ENCODE measurements at regions of chr11 and their contacts with region 1.

Region 1: GRCh38 chr11:63838678-63839507 is at the start of gene MARK2:
- DNase-seq: peak; percentile 99 to 100 (median 99)
- H3K4me3 ChIP-seq: peak within 1 kb of the TSS; percentile 87 to 88
- H3K4me3 Mint-ChIP-seq: peak within 1 kb of the TSS; percentile 87 to 95 (median 91)
- H3K27ac ChIP-seq: peak within 1 kb of the TSS; percentile 86
- H3K27ac Mint-ChIP-seq: peak within 1 kb of the TSS; percentile 85 to 97 (median 95)
- H3K4me1 ChIP-seq: peaks cover 48% of the 10 kb centered on the region
- H3K4me1 Mint-ChIP-seq: peaks cover 40 to 72% (median 54%) of the 10 kb centered on the region in 4 donors
- H3K27me3 ChIP-seq: no peaks in the 10 kb centered on the region
- H3K27me3 Mint-ChIP-seq: no peaks in the 10 kb centered on the region
- total RNA-seq, gene MARK2: 60.4 to 68.0 TPM

Region 2: DNA sequence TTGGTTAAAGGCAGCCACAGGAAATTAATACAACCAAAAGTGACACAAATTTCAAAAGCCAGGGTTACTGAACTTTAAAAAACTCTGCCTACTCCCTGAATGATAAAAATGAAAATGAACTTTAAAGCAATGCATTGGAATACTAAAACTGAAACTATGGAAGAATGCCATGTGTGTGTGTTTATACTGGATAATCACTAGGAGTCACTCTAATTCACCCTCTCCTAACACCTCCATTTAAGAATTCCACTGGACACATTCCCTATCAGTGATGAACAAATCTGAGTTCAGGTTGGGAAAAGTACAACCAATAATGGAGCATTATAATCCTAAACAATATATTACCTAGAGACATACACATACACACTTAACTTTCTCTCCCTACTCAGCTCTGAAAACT is 197.2 kb before region 1 on chr11:
- CTCF ChIA-PET with region 1: no interaction called
- POLR2A ChIA-PET with region 1: no interaction called
- intact Hi-C with region 1: no loop called
- DNase-seq: no peak
- H3K4me3 ChIP-seq: no peak overlapping the region
- H3K4me3 Mint-ChIP-seq: no peak overlapping the region
- H3K27ac ChIP-seq: no peak overlapping the region
- H3K27ac Mint-ChIP-seq: peak overlapping the region in 3 of 7 donors; percentile 36 to 57 (median 55)
- H3K4me1 ChIP-seq: no peaks in the 10 kb centered on the region
- H3K4me1 Mint-ChIP-seq: peaks cover 7 to 19% (median 12%) of the 10 kb centered on the region in 4 donors
- H3K27me3 ChIP-seq: no peaks in the 10 kb centered on the region
- H3K27me3 Mint-ChIP-seq: no peaks in the 10 kb centered on the region

Region 3: GRCh38 chr11:63855975-63856749 is 17.3 kb after region 1 on chr11:
- CTCF ChIA-PET with region 1: interaction called, 24 read pairs
- POLR2A ChIA-PET with region 1: interaction called, 10 read pairs
- intact Hi-C with region 1: no loop called
- DNase-seq: no peak
- H3K4me3 ChIP-seq: no peak overlapping the region
- H3K4me3 Mint-ChIP-seq: peak overlapping the region in 5 of 8 donors; percentile 7 to 35 (median 13)
- H3K27ac ChIP-seq: no peak overlapping the region
- H3K27ac Mint-ChIP-seq: peak overlapping the region in 5 of 7 donors; percentile 24 to 91 (median 47)
- H3K4me1 ChIP-seq: peaks cover 62% of the 10 kb centered on the region
- H3K4me1 Mint-ChIP-seq: peaks cover 33 to 67% (median 48%) of the 10 kb centered on the region in 4 donors
- H3K27me3 ChIP-seq: no peaks in the 10 kb centered on the region
- H3K27me3 Mint-ChIP-seq: no peaks in the 10 kb centered on the region

Region 4: DNA sequence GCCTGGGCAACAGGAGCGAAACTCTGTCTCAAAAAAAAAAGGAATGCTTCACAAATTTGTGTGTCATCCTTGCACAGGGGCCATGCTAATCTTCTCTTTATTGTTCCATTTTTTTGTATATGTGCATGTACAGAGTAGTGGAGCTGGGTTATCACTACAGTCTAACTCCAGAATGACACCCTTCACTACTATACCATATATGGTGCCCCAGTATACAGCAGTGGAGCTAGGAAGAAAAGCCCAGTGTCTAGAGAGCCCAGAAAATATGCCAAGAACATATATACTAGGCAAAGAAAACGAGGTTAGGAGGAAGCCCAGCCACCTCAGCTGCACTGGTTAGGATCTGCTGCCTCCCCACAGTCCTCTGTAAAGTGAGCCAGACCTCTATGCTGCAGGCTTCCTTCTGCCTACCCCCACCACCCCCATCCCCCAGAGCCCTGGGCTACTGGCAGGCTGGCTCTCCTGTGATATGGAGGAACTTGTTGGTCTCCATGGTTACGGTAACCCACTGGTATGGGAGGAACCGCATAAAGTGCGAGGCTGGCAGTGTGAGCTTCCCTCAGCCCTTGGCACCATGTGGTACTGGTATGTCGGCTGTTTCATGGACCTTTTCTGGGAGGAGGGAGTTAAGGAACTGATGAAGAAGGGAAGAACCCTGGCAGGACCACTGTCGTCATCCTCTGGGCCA is 43.8 kb after region 1 on chr11:
- CTCF ChIA-PET with region 1: interaction called, 20 read pairs
- POLR2A ChIA-PET with region 1: interaction called, 83 read pairs
- intact Hi-C with region 1: no loop called
- DNase-seq: peak in 2 of 5 donors; percentile 32 to 35
- H3K4me3 ChIP-seq: no peak overlapping the region
- H3K4me3 Mint-ChIP-seq: peak overlapping the region in 3 of 8 donors; percentile 26 to 33 (median 32)
- H3K27ac ChIP-seq: no peak overlapping the region
- H3K27ac Mint-ChIP-seq: peak overlapping the region; percentile 47 to 94 (median 80)
- H3K4me1 ChIP-seq: peaks cover 68% of the 10 kb centered on the region
- H3K4me1 Mint-ChIP-seq: peaks cover 45 to 78% (median 66%) of the 10 kb centered on the region in 4 donors
- H3K27me3 ChIP-seq: no peaks in the 10 kb centered on the region
- H3K27me3 Mint-ChIP-seq: no peaks in the 10 kb centered on the region

Region 5: GRCh38 chr11:63906585-63906984 is 67.7 kb after region 1 on chr11:
- CTCF ChIA-PET with region 1: interaction called, 64 read pairs
- POLR2A ChIA-PET with region 1: interaction called, 25 read pairs
- intact Hi-C with region 1: loop called (anchors 1 kb)
- DNase-seq: peak; percentile 45 to 52 (median 49)
- H3K4me3 ChIP-seq: no peak overlapping the region
- H3K4me3 Mint-ChIP-seq: no peak overlapping the region
- H3K27ac ChIP-seq: no peak overlapping the region
- H3K27ac Mint-ChIP-seq: peak overlapping the region in 4 of 7 donors; percentile 7 to 67 (median 38)
- H3K4me1 ChIP-seq: no peaks in the 10 kb centered on the region
- H3K4me1 Mint-ChIP-seq: peaks cover 0 to 4% (median 3%) of the 10 kb centered on the region in 4 donors
- H3K27me3 ChIP-seq: no peaks in the 10 kb centered on the region
- H3K27me3 Mint-ChIP-seq: no peaks in the 10 kb centered on the region

Region 6: GRCh38 chr11:63945477-63946163 is 106.7 kb after region 1 on chr11:
- CTCF ChIA-PET with region 1: interaction called, 337 read pairs
- POLR2A ChIA-PET with region 1: interaction called, 43 read pairs
- intact Hi-C with region 1: loop called (anchors 1 kb)
- DNase-seq: peak; percentile 45 to 53 (median 49)
- H3K4me3 ChIP-seq: no peak overlapping the region
- H3K4me3 Mint-ChIP-seq: no peak overlapping the region
- H3K27ac ChIP-seq: no peak overlapping the region
- H3K27ac Mint-ChIP-seq: peak overlapping the region in 1 of 7 donors; percentile 30
- H3K4me1 ChIP-seq: peaks cover under 1% of the 10 kb centered on the region
- H3K4me1 Mint-ChIP-seq: peaks cover 4 to 14% (median 8%) of the 10 kb centered on the region in 4 donors
- H3K27me3 ChIP-seq: no peaks in the 10 kb centered on the region
- H3K27me3 Mint-ChIP-seq: no peaks in the 10 kb centered on the region

Region 7: GRCh38 chr11:64000026-64000739 is 161.3 kb after region 1 on chr11:
- CTCF ChIA-PET with region 1: interaction called, 23 read pairs
- POLR2A ChIA-PET with region 1: no interaction called
- intact Hi-C with region 1: no loop called
- DNase-seq: peak; percentile 66 to 79 (median 76)
- H3K4me3 ChIP-seq: peak overlapping the region in 1 of 2 donors; percentile 28
- H3K4me3 Mint-ChIP-seq: peak overlapping the region in 6 of 8 donors; percentile 21 to 76 (median 50)
- H3K27ac ChIP-seq: no peak overlapping the region
- H3K27ac Mint-ChIP-seq: no peak overlapping the region
- H3K4me1 ChIP-seq: peaks cover 8% of the 10 kb centered on the region
- H3K4me1 Mint-ChIP-seq: peaks cover 0 to 5% (median 3%) of the 10 kb centered on the region in 4 donors
- H3K27me3 ChIP-seq: no peaks in the 10 kb centered on the region
- H3K27me3 Mint-ChIP-seq: no peaks in the 10 kb centered on the region

Measured in CD4-positive, alpha-beta memory T cell (primary cell).